ENCODE measurements at regions of chr6 and their contacts with region 1.

Region 1: GRCh38 chr6:5030596-5031136 is 26.8 kb upstream of the RPP40 start:
- DNase-seq: peak; percentile 57
- ATAC-seq: peak; percentile 99
- H3K4me3 ChIP-seq: no peak overlapping the region
- H3K27ac ChIP-seq: no peak overlapping the region
- H3K4me1 ChIP-seq: peaks cover 3% of the 10 kb centered on the region; the same call in 1 of the 2 replicates
- H3K27me3 ChIP-seq: no peaks in the 10 kb centered on the region
- CTCF ChIP-seq: peak; percentile 68 to 74 (median 70)
- EP300 ChIP-seq: no peak
- POLR2A ChIP-seq: no peak
- RAD21 ChIP-seq: peak; percentile 77

Region 2: DNA sequence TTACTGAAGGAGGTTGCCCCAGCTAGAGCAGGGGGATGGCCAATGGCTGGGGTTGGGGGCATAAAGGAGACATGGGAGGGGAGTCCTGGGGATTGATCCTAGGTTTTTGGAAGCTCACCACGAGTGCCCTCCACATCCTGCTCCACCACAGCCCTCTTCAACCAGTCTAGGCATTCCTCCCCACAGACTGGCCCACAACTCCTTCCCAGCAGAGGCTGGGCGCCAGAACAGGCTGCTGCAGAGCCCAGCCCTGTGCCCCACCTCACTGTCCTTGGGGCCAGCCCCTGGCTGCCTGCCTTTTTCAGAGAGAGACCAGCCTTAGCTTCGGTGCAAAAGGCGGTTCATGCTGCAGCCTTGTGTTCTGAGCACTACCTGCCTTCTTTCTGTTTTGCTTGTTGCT is 43.2 kb before region 1 on chr6:
- CTCF ChIA-PET with region 1: no interaction called
- POLR2A ChIA-PET with region 1: no interaction called
- RAD21 ChIA-PET with region 1: no interaction called
- SMC1A ChIA-PET with region 1: no interaction called
- in situ Hi-C with region 1: no loop called
- intact Hi-C with region 1: no loop called
- DNase-seq: no peak
- ATAC-seq: no peak
- H3K4me3 ChIP-seq: no peak overlapping the region
- H3K27ac ChIP-seq: no peak overlapping the region
- H3K4me1 ChIP-seq: no peaks in the 10 kb centered on the region
- H3K27me3 ChIP-seq: no peaks in the 10 kb centered on the region; a peak in 1 of 4 replicates
- CTCF ChIP-seq: no peak
- EP300 ChIP-seq: no peak
- POLR2A ChIP-seq: no peak
- RAD21 ChIP-seq: no peak

Region 3: DNA sequence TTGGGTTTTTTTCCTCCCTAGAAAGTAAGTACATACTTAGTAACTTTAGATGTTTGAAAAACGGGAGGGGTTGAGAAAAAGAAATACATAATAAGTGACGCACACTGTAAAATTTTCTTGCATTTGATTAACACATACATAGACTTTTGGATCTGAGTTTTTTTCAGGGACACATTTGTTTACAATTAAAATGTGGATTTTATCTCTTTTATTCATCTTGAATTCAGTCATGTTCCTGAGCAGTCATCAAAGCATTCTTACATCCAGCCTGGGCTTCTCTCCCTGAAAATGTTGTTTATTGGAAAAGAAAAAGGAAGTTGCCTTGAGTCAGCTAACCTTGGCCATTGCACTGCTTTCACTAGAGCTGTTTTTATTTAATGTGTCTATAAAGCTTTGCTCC is 18.1 kb before region 1 on chr6:
- CTCF ChIA-PET with region 1: interaction called, 10 read pairs
- POLR2A ChIA-PET with region 1: no interaction called
- RAD21 ChIA-PET with region 1: no interaction called
- SMC1A ChIA-PET with region 1: no interaction called
- in situ Hi-C with region 1: no loop called
- intact Hi-C with region 1: no loop called
- DNase-seq: no peak
- ATAC-seq: no peak
- H3K4me3 ChIP-seq: no peak overlapping the region
- H3K27ac ChIP-seq: no peak overlapping the region
- H3K4me1 ChIP-seq: no peaks in the 10 kb centered on the region
- H3K27me3 ChIP-seq: no peaks in the 10 kb centered on the region
- CTCF ChIP-seq: no peak
- EP300 ChIP-seq: no peak
- POLR2A ChIP-seq: no peak
- RAD21 ChIP-seq: no peak

Region 4: GRCh38 chr6:5078121-5078669 is 47.5 kb after region 1 on chr6:
- CTCF ChIA-PET with region 1: no interaction called
- POLR2A ChIA-PET with region 1: no interaction called
- RAD21 ChIA-PET with region 1: no interaction called
- SMC1A ChIA-PET with region 1: no interaction called
- in situ Hi-C with region 1: no loop called
- intact Hi-C with region 1: no loop called
- DNase-seq: no peak
- ATAC-seq: peak; percentile 85
- H3K4me3 ChIP-seq: no peak overlapping the region
- H3K27ac ChIP-seq: no peak overlapping the region
- H3K4me1 ChIP-seq: no peaks in the 10 kb centered on the region
- H3K27me3 ChIP-seq: no peaks in the 10 kb centered on the region
- CTCF ChIP-seq: peak; percentile 30 to 47 (median 39); a peak in 5 of 6 replicates
- EP300 ChIP-seq: no peak
- POLR2A ChIP-seq: no peak
- RAD21 ChIP-seq: 0 out of 2 replicates have a peak, but pooled peaks have one; percentile 17

Region 5: GRCh38 chr6:5095236-5095635 is 64.6 kb after region 1 on chr6:
- CTCF ChIA-PET with region 1: no interaction called
- POLR2A ChIA-PET with region 1: no interaction called
- RAD21 ChIA-PET with region 1: no interaction called
- SMC1A ChIA-PET with region 1: no interaction called
- in situ Hi-C with region 1: no loop called
- intact Hi-C with region 1: no loop called
- DNase-seq: peak; percentile 56
- ATAC-seq: peak; percentile 79
- H3K4me3 ChIP-seq: no peak overlapping the region
- H3K27ac ChIP-seq: peak overlapping the region; percentile 69
- H3K4me1 ChIP-seq: peaks cover 35% of the 10 kb centered on the region
- H3K27me3 ChIP-seq: peaks cover 0 to under 1% of the 10 kb centered on the region in 2 experiments; a peak in 2 of 4 replicates
- CTCF ChIP-seq: no peak
- EP300 ChIP-seq: no peak
- POLR2A ChIP-seq: no peak
- RAD21 ChIP-seq: no peak

Region 6: GRCh38 chr6:5135788-5136376 is 105.2 kb after region 1 on chr6:
- CTCF ChIA-PET with region 1: no interaction called
- POLR2A ChIA-PET with region 1: no interaction called
- RAD21 ChIA-PET with region 1: no interaction called
- SMC1A ChIA-PET with region 1: no interaction called
- in situ Hi-C with region 1: no loop called
- intact Hi-C with region 1: no loop called
- DNase-seq: no peak
- ATAC-seq: peak; percentile 76
- H3K4me3 ChIP-seq: no peak overlapping the region
- H3K27ac ChIP-seq: no peak overlapping the region
- H3K4me1 ChIP-seq: peaks cover 20% of the 10 kb centered on the region
- H3K27me3 ChIP-seq: no peaks in the 10 kb centered on the region
- CTCF ChIP-seq: peak; percentile 47 to 78 (median 68)
- EP300 ChIP-seq: no peak
- POLR2A ChIP-seq: no peak
- RAD21 ChIP-seq: peak; percentile 46